ENCODE measurements at regions of chr20 and their contacts with region 1.

Region 1: GRCh38 chr20:45857114-45857881 is at the starts of genes ACOT8 and ZSWIM3:
- DNase-seq: peak; percentile 99 to 100 (median 100)
- H3K4me3 ChIP-seq: peak within 1 kb of the TSS; percentile 92 to 98 (median 96)
- H3K4me3 Mint-ChIP-seq: peak within 1 kb of the TSS; percentile 89 to 95
- H3K27ac ChIP-seq: peak within 1 kb of the TSS; percentile 70 to 95
- H3K27ac Mint-ChIP-seq: peak within 1 kb of the TSS; percentile 90 to 97 (median 97)
- H3K4me1 ChIP-seq: peaks cover 19 to 26% of the 10 kb centered on the region in 2 donors
- H3K4me1 Mint-ChIP-seq: peaks cover 33% of the 10 kb centered on the region
- H3K27me3 ChIP-seq: no peaks in the 10 kb centered on the region
- H3K27me3 Mint-ChIP-seq: peaks cover 0 to 3% (median 2%) of the 10 kb centered on the region in 3 donors
- CTCF ChIP-seq: no peak
- polyA plus RNA-seq, gene ACOT8: 40.9 to 52.4 (median 44.6) TPM
- polyA plus RNA-seq, gene ZSWIM3: 0.29 to 1.5 (median 0.64) TPM

Region 2: GRCh38 chr20:45890985-45891983 is 34.0 kb after region 1 on chr20 and contains the starts of genes CTSA and NEURL2:
- intact Hi-C with region 1: loop called in 1 of 2 experiments (anchors 5 kb)
- DNase-seq: peak; percentile 73 to 89 (median 82)
- H3K4me3 ChIP-seq: peak within 1 kb of the TSS; percentile 62 to 95 (median 72)
- H3K4me3 Mint-ChIP-seq: peak within 1 kb of the TSS; percentile 91 to 93
- H3K27ac ChIP-seq: peak within 1 kb of the TSS; percentile 59 to 87
- H3K27ac Mint-ChIP-seq: peak within 1 kb of the TSS; percentile 85 to 96 (median 91)
- H3K4me1 ChIP-seq: peaks cover 36 to 46% of the 10 kb centered on the region in 2 donors
- H3K4me1 Mint-ChIP-seq: peaks cover 33% of the 10 kb centered on the region
- H3K27me3 ChIP-seq: no peaks in the 10 kb centered on the region
- H3K27me3 Mint-ChIP-seq: no peaks in the 10 kb centered on the region
- CTCF ChIP-seq: no peak
- polyA plus RNA-seq, gene CTSA: 279 to 489 (median 366) TPM
- polyA plus RNA-seq, gene NEURL2: 0.14 to 1.1 TPM in 2 of 3 donors, not detected in the other

Measured in CD14-positive monocyte (primary cell).